Panc1 (cell line): ENCODE measurements at regions of chr12 and their contacts with region 1.

Region 1: GRCh38 chr12:538731-539539 is 79.2 kb downstream of the B4GALNT3 start:
- DNase-seq: no peak
- ATAC-seq: 0 out of 2 replicates have a peak, but pooled peaks have one; percentile 36
- H3K4me3 ChIP-seq: no peak overlapping the region
- H3K27ac ChIP-seq: no peak overlapping the region
- H3K4me1 ChIP-seq: no peaks in the 10 kb centered on the region; the same call in 1 of the 2 replicates
- H3K27me3 ChIP-seq: no peaks in the 10 kb centered on the region
- CTCF ChIP-seq: no peak

Region 2: GRCh38 chr12:553205-554000 is 14.5 kb after region 1 on chr12:
- CTCF ChIA-PET with region 1: no interaction called
- POLR2A ChIA-PET with region 1: no interaction called
- in situ Hi-C with region 1: no loop called
- intact Hi-C with region 1: no loop called
- DNase-seq: no peak
- ATAC-seq: no peak
- H3K4me3 ChIP-seq: no peak overlapping the region
- H3K27ac ChIP-seq: no peak overlapping the region
- H3K4me1 ChIP-seq: no peaks in the 10 kb centered on the region
- H3K27me3 ChIP-seq: no peaks in the 10 kb centered on the region
- CTCF ChIP-seq: no peak

Region 3: GRCh38 chr12:607526-608001 is 68.6 kb after region 1 on chr12:
- CTCF ChIA-PET with region 1: no interaction called
- POLR2A ChIA-PET with region 1: interaction called, 10 read pairs
- in situ Hi-C with region 1: no loop called
- intact Hi-C with region 1: no loop called
- DNase-seq: no peak
- ATAC-seq: no peak
- H3K4me3 ChIP-seq: no peak overlapping the region
- H3K27ac ChIP-seq: peak overlapping the region; percentile 7; the same call in 1 of the 2 replicates
- H3K4me1 ChIP-seq: peaks cover 8% of the 10 kb centered on the region
- H3K27me3 ChIP-seq: no peaks in the 10 kb centered on the region
- CTCF ChIP-seq: no peak